Calu3 (cell line): ENCODE measurements at regions of chr6 and their contacts with region 1.

Region 1: GRCh38 chr6:56046576-56046975 is 171.2 kb upstream of the BMP5 start:
- DNase-seq: peak; percentile 78
- H3K4me3 Mint-ChIP-seq: no peak overlapping the region
- H3K27ac Mint-ChIP-seq: peak overlapping the region; percentile 50
- H3K4me1 Mint-ChIP-seq: no peaks in the 10 kb centered on the region
- H3K27me3 Mint-ChIP-seq: no peaks in the 10 kb centered on the region
- CTCF ChIP-seq: no peak

Region 2: GRCh38 chr6:55841341-55841740 is 205.2 kb before region 1 on chr6:
- CTCF ChIA-PET with region 1: no interaction called
- intact Hi-C with region 1: no loop called
- DNase-seq: no peak
- H3K4me3 Mint-ChIP-seq: no peak overlapping the region
- H3K27ac Mint-ChIP-seq: no peak overlapping the region
- H3K4me1 Mint-ChIP-seq: peaks cover 8% of the 10 kb centered on the region
- H3K27me3 Mint-ChIP-seq: no peaks in the 10 kb centered on the region
- CTCF ChIP-seq: no peak

Region 3: GRCh38 chr6:56101141-56101553 is 54.6 kb after region 1 on chr6:
- CTCF ChIA-PET with region 1: no interaction called
- intact Hi-C with region 1: loop called (anchors 5 kb)
- DNase-seq: peak; percentile 34
- H3K4me3 Mint-ChIP-seq: peak overlapping the region; percentile 44
- H3K27ac Mint-ChIP-seq: peak overlapping the region; percentile 79
- H3K4me1 Mint-ChIP-seq: peaks cover 23% of the 10 kb centered on the region
- H3K27me3 Mint-ChIP-seq: no peaks in the 10 kb centered on the region
- CTCF ChIP-seq: no peak

Region 4: DNA sequence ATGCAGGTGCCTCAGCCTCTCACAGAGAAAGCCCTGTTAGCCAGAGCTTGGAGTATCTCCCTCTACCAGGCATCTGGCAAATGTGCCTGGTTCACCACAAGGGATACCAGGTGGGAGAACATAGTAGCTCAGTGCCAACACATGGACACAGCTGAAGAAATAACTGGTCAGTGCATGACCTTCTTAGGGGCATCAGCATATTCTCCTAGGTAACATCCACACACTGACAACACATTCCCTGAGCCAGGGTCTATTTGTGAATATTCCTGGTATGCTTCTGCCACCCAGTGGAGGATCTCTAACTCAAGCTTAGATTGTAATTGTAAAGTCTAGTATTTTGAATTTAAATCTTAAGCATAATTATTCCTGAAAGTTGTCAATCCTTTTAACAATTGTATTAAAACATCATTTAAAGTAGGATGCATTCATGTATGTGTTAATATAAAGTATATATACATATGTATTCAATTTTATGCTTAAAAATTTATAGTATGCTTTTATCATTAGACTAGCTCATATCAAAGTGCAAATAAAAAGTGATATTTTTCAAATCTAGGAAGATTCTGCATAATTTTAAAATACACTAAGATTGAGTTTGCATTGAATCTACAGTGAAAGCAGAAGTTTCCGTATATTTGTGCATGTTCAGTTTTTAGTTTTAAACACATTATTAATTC is 246.1 kb after region 1 on chr6:
- CTCF ChIA-PET with region 1: interaction called, 5 read pairs
- intact Hi-C with region 1: loop called (anchors 5 kb)
- DNase-seq: peak; percentile 49
- H3K4me3 Mint-ChIP-seq: no peak overlapping the region
- H3K27ac Mint-ChIP-seq: no peak overlapping the region
- H3K4me1 Mint-ChIP-seq: peaks cover 19% of the 10 kb centered on the region
- H3K27me3 Mint-ChIP-seq: no peaks in the 10 kb centered on the region
- CTCF ChIP-seq: peak; percentile 64

Region 5: DNA sequence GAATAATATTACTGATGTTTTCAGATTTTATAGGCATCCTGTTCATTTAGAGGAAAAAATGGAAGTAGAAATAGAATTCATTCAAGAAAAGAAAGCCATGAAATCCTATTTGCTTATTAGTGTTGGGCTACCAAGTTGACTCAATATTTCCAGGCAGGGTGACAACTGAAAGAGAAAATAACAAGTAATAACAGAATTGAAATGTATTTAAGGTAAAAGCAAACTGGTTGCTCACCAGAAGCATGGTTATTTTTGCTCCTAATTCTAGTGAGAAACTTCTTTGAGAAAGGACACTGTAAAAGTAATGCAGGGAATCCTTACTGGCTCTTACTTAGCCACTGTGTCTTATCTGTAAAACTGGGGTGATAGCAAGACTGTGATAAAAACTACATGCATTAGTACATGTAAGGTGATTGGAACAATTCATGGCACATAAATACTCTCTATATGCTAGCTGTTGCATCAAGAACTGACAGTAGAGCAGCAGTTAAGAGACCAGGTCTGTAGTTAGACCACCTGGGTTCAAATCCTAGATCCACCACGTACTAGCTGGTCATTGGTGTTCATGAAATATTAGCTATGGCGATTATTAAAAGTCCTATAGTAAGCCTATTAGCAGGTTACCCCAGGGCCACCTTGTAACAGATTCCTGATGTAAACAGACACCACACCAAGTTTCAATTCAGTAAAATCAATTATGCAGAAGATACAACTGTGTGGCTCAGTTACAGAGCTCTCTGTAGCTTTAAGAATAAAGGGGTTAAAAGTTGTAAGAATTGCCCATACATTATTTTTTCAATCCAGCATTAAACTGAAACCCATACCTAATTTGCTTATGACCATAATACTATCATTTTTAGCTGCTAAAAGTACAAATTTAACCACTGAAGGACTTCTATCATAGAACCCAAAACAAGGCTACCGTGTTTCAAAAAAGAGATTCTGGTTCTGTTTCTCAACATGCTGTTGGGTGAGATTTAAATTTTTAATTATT is 360.0 kb after region 1 on chr6:
- CTCF ChIA-PET with region 1: no interaction called
- intact Hi-C with region 1: no loop called
- DNase-seq: no peak
- H3K4me3 Mint-ChIP-seq: no peak overlapping the region
- H3K27ac Mint-ChIP-seq: no peak overlapping the region
- H3K4me1 Mint-ChIP-seq: no peaks in the 10 kb centered on the region
- H3K27me3 Mint-ChIP-seq: no peaks in the 10 kb centered on the region
- CTCF ChIP-seq: no peak